ENCODE measurements at regions of chr11 and their contacts with region 1.

Region 1: DNA sequence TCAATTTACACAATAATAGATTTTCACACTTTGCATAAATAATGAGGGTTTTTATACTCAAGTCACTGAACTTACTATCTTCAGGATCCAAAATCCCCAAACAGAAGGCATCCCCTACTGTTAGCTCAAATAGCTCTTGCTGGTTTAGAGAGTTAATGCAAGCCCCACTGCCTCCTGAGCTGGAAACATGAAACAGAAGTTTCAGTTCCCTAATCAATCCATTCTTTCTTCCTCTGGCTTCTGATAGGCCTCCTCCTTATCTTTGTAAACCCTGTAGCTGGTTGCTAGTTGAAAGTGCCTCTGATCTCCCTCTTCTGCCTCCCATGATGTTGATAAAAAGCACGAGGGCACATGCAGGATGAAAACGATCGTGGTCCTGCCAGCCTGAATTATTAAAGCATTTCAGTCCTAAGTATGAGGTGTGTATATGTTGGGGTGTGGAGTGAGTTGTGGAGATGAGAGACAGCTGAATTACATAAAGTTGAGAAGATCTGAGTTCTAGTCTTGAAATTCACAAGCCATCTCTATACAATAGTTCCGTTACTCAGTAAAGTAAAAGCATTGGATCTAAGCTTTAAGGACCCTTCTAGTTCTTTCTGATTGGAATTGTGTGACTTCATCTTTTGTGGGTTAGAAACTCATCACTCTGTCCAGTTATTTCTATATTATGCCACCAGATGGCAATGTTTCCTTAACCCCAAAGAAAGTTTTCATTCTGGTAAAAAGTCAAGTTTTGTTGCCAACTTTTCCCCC is 35.0 kb upstream of the EHF start:
- DNase-seq: no peak
- ATAC-seq: peak in 2 of 4 donors; percentile 35 to 56
- H3K4me3 ChIP-seq: peak overlapping the region in 4 of 12 donors; percentile 12 to 44 (median 18)
- H3K27ac ChIP-seq: no peak overlapping the region
- H3K4me1 ChIP-seq: peaks cover 0 to 8% (median 0%) of the 10 kb centered on the region in 12 donors
- H3K27me3 ChIP-seq: peaks cover 0 to 3% (median 0%) of the 10 kb centered on the region in 9 donors
- CTCF ChIP-seq: peak; percentile 42 to 79 (median 66)
- POLR2A ChIP-seq: no peak

Region 2: DNA sequence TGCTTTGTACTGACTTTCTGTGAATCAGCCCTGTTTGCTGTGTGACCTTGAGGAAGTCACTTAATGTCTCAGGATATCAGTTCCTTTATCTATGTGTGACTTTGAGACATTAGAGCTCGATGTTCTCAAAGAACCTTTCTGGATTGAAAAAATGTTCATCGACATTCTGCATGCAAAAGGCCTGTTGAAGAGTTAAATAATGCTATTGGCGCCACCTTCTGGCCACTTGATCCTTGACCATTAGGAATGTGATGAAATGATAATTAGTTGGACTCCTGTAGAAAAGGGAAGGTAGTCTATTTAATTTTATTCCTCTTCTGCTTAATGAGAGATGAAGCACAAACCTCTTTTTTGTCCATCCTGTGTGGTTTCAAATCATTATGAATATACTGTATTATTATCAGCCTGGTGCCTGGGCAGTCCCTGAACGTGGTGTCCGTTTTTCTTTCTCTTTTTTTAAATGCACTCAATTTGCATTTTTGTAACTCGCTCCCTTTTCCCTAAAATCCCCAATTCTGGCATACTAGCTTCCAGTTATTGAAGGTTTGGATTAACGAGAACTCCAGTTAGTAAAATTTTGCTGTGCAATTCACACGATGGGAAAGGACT is 93.0 kb before region 1 on chr11:
- intact Hi-C with region 1: no loop called
- DNase-seq: peak in 3 of 5 donors; percentile 16 to 62 (median 31)
- ATAC-seq: peak in 1 of 4 donors; percentile 36
- H3K4me3 ChIP-seq: no peak overlapping the region
- H3K27ac ChIP-seq: no peak overlapping the region
- H3K4me1 ChIP-seq: no peaks in the 10 kb centered on the region
- H3K27me3 ChIP-seq: peaks cover 0 to 3% (median 0%) of the 10 kb centered on the region in 9 donors
- CTCF ChIP-seq: peak; percentile 44 to 80 (median 69)
- POLR2A ChIP-seq: no peak

Region 3: DNA sequence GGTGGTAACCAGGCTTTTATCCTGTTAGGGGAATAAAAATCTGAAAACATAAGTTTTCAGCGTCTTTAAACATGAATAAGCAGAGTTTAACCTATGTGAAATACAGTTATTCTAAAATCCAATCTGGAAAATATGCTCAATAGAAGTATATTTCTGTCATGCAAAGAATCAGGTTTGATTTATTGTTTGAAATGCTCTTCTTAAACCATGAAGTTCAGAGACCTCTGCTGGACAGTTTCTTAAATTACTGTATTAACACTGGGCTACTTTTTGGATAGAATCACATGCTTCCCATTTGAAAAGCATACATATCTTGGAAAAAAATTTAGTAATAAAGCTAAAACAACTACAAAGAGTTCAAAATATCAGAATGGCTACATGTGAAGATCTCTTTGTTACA is 304.9 kb after region 1 on chr11:
- intact Hi-C with region 1: loop called (anchors 1 to 2 kb)
- DNase-seq: no peak
- ATAC-seq: peak in 2 of 4 donors; percentile 38 to 39
- H3K4me3 ChIP-seq: no peak overlapping the region
- H3K27ac ChIP-seq: no peak overlapping the region
- H3K4me1 ChIP-seq: no peaks in the 10 kb centered on the region
- H3K27me3 ChIP-seq: no peaks in the 10 kb centered on the region
- CTCF ChIP-seq: peak; percentile 14 to 68 (median 40)
- POLR2A ChIP-seq: no peak